Right lobe of liver (tissue), 6 donors: ENCODE measurements at regions of chr1 and their contacts with region 1.

Region 1: DNA sequence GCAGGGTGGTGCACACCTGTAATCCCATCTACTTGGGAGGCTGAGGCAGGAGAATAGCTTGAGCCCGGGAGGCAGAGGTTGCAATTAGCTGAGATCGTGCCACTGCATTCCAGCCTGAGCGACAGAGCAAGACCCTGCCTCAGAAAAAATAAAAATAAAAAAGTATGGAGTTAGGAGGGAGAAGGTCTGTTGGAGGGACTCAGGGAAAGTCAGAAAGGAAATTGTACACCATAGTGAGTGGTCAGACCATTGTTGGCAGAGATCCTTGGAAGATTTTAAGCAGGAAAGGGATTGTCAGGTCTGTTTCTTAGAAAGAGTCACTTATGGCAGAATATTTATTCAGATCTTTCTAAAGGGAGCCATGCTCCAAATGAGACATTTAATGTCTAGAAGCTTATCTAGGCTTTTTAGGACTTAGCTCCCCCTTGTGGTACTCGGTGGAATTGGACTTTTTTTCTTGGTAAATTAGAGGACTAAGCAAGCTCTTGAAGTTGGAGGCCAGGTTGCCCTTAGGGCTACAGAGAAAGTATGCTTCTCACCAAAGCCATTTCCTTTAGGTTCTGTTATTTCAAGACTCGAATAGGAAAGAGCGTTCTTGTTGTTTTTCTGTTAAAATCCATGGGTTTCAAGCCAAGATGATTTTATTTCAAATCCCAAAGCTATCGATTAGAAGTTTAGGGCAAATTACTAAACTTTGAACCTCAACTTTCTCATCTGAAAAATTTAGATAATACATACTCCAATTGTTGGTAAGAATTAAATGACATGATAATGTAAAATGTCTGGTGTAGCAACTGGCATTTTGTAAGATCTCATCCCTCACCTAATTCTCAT is 16.5 kb downstream of the MIA3 start:
- DNase-seq: peak in 1 of 3 donors; percentile 67
- ATAC-seq: peak; percentile 85 to 91 (median 88)
- H3K4me3 ChIP-seq: no peak overlapping the region
- H3K27ac ChIP-seq: peak overlapping the region in 2 of 3 donors; percentile 17 to 24
- H3K4me1 ChIP-seq: peaks cover 0 to 17% (median 0%) of the 10 kb centered on the region in 4 donors
- H3K27me3 ChIP-seq: no peaks in the 10 kb centered on the region
- CTCF ChIP-seq: peak; percentile 89 to 93 (median 91)
- POLR2A ChIP-seq: no peak

Region 2: GRCh38 chr1:222465211-222466041 is 169.0 kb before region 1 on chr1:
- intact Hi-C with region 1: loop called (anchors 5 to 10 kb)
- DNase-seq: peak; percentile 94 to 95 (median 95)
- ATAC-seq: peak; percentile 98 to 99 (median 98)
- H3K4me3 ChIP-seq: peak overlapping the region; percentile 19 to 53 (median 40)
- H3K27ac ChIP-seq: peak overlapping the region; percentile 90 to 94 (median 93)
- H3K4me1 ChIP-seq: peaks cover 0 to 13% (median 4%) of the 10 kb centered on the region in 4 donors
- H3K27me3 ChIP-seq: no peaks in the 10 kb centered on the region
- CTCF ChIP-seq: peak; percentile 100
- POLR2A ChIP-seq: peak; percentile 78